Activated T-helper 1 cell treated with anti-CD3 and anti-CD28 coated beads, Interleukin-12 subunit alpha, Interleukin-12 subunit beta, Interleukin-2, Interleukin-4 antibody, amounts not matched to agents 30 ng/mL and 10 ng/mL and 1 ng/mL, durations not matched to agents 14 hours and 24 hours and 36 hours (primary cell): ENCODE measurements at regions of chr11 and their contacts with region 1.

Region 1: GRCh38 chr11:31826536-31827438 is 15.7 kb upstream of the PAX6 start:
- DNase-seq: no peak
- H3K4me3 Mint-ChIP-seq: peak overlapping the region; percentile 1
- H3K27ac Mint-ChIP-seq: peak overlapping the region; percentile 62
- H3K4me1 Mint-ChIP-seq: peaks cover 7% of the 10 kb centered on the region
- H3K27me3 Mint-ChIP-seq: peaks cover 75% of the 10 kb centered on the region

Region 2: GRCh38 chr11:31747581-31747980 is 79.2 kb before region 1 on chr11:
- intact Hi-C with region 1: no loop called
- DNase-seq: no peak
- H3K4me3 Mint-ChIP-seq: no peak overlapping the region
- H3K27ac Mint-ChIP-seq: no peak overlapping the region
- H3K4me1 Mint-ChIP-seq: no peaks in the 10 kb centered on the region
- H3K27me3 Mint-ChIP-seq: no peaks in the 10 kb centered on the region

Region 3: GRCh38 chr11:31804312-31805036 is 22.3 kb before region 1 on chr11:
- intact Hi-C with region 1: loop called (anchors 1 kb)
- DNase-seq: no peak
- H3K4me3 Mint-ChIP-seq: peak overlapping the region; percentile 37
- H3K27ac Mint-ChIP-seq: peak overlapping the region; percentile 81
- H3K4me1 Mint-ChIP-seq: peaks cover 28% of the 10 kb centered on the region
- H3K27me3 Mint-ChIP-seq: peaks cover 90% of the 10 kb centered on the region